CD8-positive, alpha-beta T cell (primary cell): ENCODE measurements at regions of chr6 and their contacts with region 1.

Region 1: DNA sequence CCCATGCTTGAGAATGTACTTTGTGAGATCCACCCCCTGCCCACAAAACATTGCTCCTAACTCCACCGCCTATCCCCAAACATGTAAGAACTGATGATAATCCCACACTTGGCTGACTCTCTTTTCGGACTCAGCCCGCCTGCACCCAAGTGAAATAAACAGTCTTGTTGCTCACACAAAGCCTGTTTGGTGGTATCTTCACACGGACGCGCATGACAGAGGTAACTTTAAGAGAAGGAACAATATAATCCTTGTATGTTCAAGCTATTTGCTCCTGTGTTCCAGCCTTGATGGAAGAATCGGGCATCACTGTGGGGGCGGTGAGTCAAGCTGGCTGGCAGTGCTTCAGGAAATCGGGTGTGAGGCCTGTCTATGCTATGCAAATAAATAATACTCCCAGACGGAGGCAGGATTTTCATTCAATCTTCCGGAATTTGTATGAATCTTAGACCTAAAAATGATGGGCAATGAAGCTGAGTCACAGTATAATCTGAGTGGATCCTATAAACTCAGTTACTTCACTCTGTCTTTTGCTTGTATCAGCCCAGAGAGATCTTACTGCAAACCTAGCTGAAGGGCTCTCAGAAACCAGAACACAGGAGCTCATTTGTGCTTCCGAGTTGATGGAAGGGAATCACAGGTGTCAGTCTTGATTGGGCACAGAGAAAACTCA is 45.2 kb upstream of the NT5E start:
- DNase-seq: no peak
- ATAC-seq: peak; percentile 26
- H3K4me3 ChIP-seq: no peak overlapping the region
- H3K4me3 Mint-ChIP-seq: peak overlapping the region; percentile 19
- H3K27ac ChIP-seq: peak overlapping the region in 1 of 2 experiments; percentile 22
- H3K27ac Mint-ChIP-seq: peak overlapping the region; percentile 91
- H3K4me1 ChIP-seq: peaks cover 56% of the 10 kb centered on the region
- H3K4me1 Mint-ChIP-seq: peaks cover 70% of the 10 kb centered on the region
- H3K27me3 ChIP-seq: no peaks in the 10 kb centered on the region
- H3K27me3 Mint-ChIP-seq: no peaks in the 10 kb centered on the region
- CTCF ChIP-seq: no peak

Region 2: GRCh38 chr6:85058806-85059205 is 345.8 kb before region 1 on chr6:
- CTCF ChIA-PET with region 1: no interaction called
- POLR2A ChIA-PET with region 1: no interaction called
- intact Hi-C with region 1: no loop called
- DNase-seq: no peak
- ATAC-seq: no peak
- H3K4me3 ChIP-seq: no peak overlapping the region
- H3K4me3 Mint-ChIP-seq: no peak overlapping the region
- H3K27ac ChIP-seq: no peak overlapping the region
- H3K27ac Mint-ChIP-seq: no peak overlapping the region
- H3K4me1 ChIP-seq: no peaks in the 10 kb centered on the region
- H3K4me1 Mint-ChIP-seq: no peaks in the 10 kb centered on the region
- H3K27me3 ChIP-seq: no peaks in the 10 kb centered on the region
- H3K27me3 Mint-ChIP-seq: no peaks in the 10 kb centered on the region
- CTCF ChIP-seq: no peak

Region 3: GRCh38 chr6:85360794-85361642 is 43.6 kb before region 1 on chr6:
- CTCF ChIA-PET with region 1: no interaction called
- POLR2A ChIA-PET with region 1: no interaction called
- intact Hi-C with region 1: loop called in 1 of 2 experiments (anchors 5 kb)
- DNase-seq: no peak
- ATAC-seq: no peak
- H3K4me3 ChIP-seq: no peak overlapping the region
- H3K4me3 Mint-ChIP-seq: no peak overlapping the region
- H3K27ac ChIP-seq: no peak overlapping the region
- H3K27ac Mint-ChIP-seq: no peak overlapping the region
- H3K4me1 ChIP-seq: no peaks in the 10 kb centered on the region
- H3K4me1 Mint-ChIP-seq: no peaks in the 10 kb centered on the region
- H3K27me3 ChIP-seq: no peaks in the 10 kb centered on the region
- H3K27me3 Mint-ChIP-seq: no peaks in the 10 kb centered on the region
- CTCF ChIP-seq: no peak

Region 4: DNA sequence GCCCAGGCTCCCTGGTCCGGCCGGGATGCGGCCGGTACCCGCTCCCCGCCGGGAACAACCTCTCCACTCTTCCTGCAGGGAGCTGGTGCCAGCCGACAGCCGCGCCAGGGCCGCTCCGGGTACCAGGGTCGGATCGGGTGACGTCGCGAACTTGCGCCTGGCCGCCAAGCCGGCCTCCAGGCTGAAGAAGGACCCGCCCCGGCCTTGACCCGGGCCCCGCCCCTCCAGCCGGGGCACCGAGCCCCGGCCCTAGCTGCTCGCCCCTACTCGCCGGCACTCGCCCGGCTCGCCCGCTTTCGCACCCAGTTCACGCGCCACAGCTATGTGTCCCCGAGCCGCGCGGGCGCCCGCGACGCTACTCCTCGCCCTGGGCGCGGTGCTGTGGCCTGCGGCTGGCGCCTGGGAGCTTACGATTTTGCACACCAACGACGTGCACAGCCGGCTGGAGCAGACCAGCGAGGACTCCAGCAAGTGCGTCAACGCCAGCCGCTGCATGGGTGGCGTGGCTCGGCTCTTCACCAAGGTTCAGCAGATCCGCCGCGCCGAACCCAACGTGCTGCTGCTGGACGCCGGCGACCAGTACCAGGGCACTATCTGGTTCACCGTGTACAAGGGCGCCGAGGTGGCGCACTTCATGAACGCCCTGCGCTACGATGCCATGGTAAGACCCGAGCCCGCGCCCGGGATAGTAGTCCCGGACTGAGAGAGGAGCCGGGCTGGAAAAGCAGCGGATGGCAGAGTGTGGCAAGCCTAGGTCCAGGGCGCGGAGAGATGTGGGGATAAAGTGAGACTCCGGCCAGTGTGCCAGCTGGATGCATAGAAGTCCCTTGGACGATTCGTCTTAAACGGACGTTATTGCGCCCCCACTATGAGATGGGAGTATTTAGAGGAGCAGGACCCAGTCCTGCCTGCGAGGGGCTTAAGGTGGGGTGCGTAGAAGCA is 45.5 kb after region 1 on chr6 and contains the start of gene NT5E:
- CTCF ChIA-PET with region 1: interaction called, 36 read pairs
- POLR2A ChIA-PET with region 1: interaction called, 16 read pairs
- intact Hi-C with region 1: loop called in 1 of 2 experiments (anchors 1 kb)
- DNase-seq: peak; percentile 19 to 78 (median 61)
- ATAC-seq: peak; percentile 58
- H3K4me3 ChIP-seq: peak within 1 kb of the TSS; percentile 64 to 65
- H3K4me3 Mint-ChIP-seq: peak within 1 kb of the TSS; percentile 98
- H3K27ac ChIP-seq: peak within 1 kb of the TSS; percentile 40 to 71
- H3K27ac Mint-ChIP-seq: peak within 1 kb of the TSS; percentile 97
- H3K4me1 ChIP-seq: peaks cover 44% of the 10 kb centered on the region
- H3K4me1 Mint-ChIP-seq: peaks cover 62% of the 10 kb centered on the region
- H3K27me3 ChIP-seq: peaks cover 0 to 6% of the 10 kb centered on the region in 2 experiments
- H3K27me3 Mint-ChIP-seq: no peaks in the 10 kb centered on the region
- CTCF ChIP-seq: no peak
- total RNA-seq, gene NT5E: 12.7 to 13.0 TPM

Region 5: GRCh38 chr6:85460921-85461797 is 56.5 kb after region 1 on chr6:
- CTCF ChIA-PET with region 1: no interaction called
- POLR2A ChIA-PET with region 1: interaction called, 3 read pairs
- intact Hi-C with region 1: loop called in 1 of 2 experiments (anchors 5 kb)
- DNase-seq: peak in 7 of 9 experiments; percentile 26 to 75 (median 62)
- ATAC-seq: peak; percentile 64
- H3K4me3 ChIP-seq: peak overlapping the region in 1 of 2 experiments; percentile 0
- H3K4me3 Mint-ChIP-seq: peak overlapping the region; percentile 70
- H3K27ac ChIP-seq: peak overlapping the region; percentile 22 to 69
- H3K27ac Mint-ChIP-seq: peak overlapping the region; percentile 92
- H3K4me1 ChIP-seq: peaks cover 100% of the 10 kb centered on the region
- H3K4me1 Mint-ChIP-seq: peaks cover 98% of the 10 kb centered on the region
- H3K27me3 ChIP-seq: no peaks in the 10 kb centered on the region
- H3K27me3 Mint-ChIP-seq: peaks cover 2% of the 10 kb centered on the region
- CTCF ChIP-seq: no peak